Activated CD4-positive, alpha-beta memory T cell treated with anti-CD3 and anti-CD28 coated beads for 36 hours (primary cell): ENCODE measurements at regions of chr7 and their contacts with region 1.

Region 1: DNA sequence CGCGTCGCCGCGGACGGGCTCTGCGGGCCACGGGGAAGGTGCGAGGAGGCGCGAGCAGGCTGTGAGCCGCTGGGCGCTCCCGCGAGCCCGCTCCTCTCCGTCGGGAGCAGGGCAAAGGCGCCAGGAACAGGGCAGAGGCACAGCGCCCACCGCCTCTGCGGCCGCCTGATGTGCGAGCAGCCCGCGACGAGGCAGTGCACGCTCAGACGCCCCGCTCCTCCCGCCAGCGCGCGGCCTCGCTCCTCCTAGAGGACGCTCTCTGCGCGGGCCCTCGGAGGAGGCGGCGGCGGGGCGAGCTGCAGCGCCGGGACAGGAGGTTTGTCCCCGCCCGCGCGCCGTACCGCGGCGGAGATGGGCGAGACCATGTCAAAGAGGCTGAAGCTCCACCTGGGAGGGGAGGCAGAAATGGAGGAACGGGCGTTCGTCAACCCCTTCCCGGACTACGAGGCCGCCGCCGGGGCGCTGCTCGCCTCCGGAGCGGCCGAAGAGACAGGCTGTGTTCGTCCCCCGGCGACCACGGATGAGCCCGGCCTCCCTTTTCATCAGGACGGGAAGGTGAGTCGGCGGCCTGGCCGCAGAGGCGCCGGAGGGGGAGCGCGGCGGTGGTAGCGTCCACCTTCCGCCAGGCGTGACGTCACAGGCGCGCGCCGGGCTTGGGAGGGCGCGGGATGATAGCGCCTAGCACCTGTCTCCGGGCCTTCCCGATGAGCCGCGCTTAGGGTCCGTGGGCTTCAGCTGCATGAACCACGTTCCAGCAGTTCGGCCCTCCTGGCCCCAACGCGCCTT is 731 bp downstream of the LANCL2 start:
- DNase-seq: peak; percentile 95
- H3K4me3 Mint-ChIP-seq: peak overlapping the region; percentile 80
- H3K27ac Mint-ChIP-seq: peak overlapping the region; percentile 98
- H3K4me1 Mint-ChIP-seq: peaks cover 26% of the 10 kb centered on the region
- H3K27me3 Mint-ChIP-seq: no peaks in the 10 kb centered on the region

Region 2: GRCh38 chr7:54591404-54592386 is 774.2 kb before region 1 on chr7:
- CTCF ChIA-PET with region 1: no interaction called
- POLR2A ChIA-PET with region 1: no interaction called
- intact Hi-C with region 1: no loop called
- DNase-seq: no peak
- H3K4me3 Mint-ChIP-seq: no peak overlapping the region
- H3K27ac Mint-ChIP-seq: no peak overlapping the region
- H3K4me1 Mint-ChIP-seq: no peaks in the 10 kb centered on the region
- H3K27me3 Mint-ChIP-seq: no peaks in the 10 kb centered on the region

Region 3: DNA sequence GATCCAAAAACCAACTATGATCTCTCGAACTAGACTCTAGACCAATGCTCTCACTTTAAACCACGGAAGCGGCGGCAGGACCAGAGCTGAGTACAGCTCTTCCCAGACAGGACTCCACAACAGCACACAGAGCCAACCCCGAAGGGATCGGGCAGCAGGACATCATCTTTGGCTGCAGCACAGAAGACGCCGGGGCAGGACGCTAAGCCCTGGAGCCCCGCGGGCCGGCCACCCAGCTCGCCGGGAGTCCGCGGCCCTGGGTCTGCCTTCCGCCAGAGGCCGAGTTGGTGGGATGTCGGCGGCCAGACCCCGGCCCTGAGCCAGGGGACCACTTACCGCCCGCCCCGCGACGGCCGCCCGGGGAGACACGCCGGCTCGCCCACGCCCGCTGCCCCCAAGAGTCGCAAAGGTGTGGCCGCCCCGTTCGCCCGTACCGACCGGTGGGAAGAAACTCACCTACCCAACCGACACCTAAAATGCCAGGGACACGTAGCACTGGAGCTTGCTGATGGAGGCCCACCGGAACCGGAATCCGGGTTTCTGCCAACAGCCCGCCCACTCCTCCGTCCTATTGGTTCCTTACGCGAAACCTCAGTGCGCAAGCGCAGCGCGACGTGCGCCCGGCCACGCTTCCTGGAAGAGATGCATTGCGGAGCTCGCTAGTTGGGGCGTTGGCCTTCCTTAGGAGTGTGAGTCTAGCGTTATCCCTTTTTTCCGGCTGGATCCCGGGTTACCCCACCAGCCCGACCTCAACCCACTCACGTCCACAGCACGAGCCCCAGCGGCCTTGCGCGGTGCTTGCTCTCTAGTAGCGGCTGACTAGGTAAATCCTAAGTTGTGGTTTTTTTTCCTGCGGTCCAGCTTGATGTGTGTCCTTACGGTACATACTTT is 606.9 kb before region 1 on chr7 and contains the start of gene SEC61G:
- CTCF ChIA-PET with region 1: no interaction called
- POLR2A ChIA-PET with region 1: interaction called, 9 read pairs
- intact Hi-C with region 1: loop called (anchors 1 kb)
- DNase-seq: peak; percentile 97
- H3K4me3 Mint-ChIP-seq: peak within 1 kb of the TSS; percentile 100
- H3K27ac Mint-ChIP-seq: peak within 1 kb of the TSS; percentile 94
- H3K4me1 Mint-ChIP-seq: peaks cover 24% of the 10 kb centered on the region
- H3K27me3 Mint-ChIP-seq: peaks cover 4% of the 10 kb centered on the region
- total RNA-seq, gene SEC61G: 171 to 177 TPM

Region 4: GRCh38 chr7:55280031-55280454 is 85.8 kb before region 1 on chr7:
- CTCF ChIA-PET with region 1: interaction called, 16 read pairs
- POLR2A ChIA-PET with region 1: no interaction called
- intact Hi-C with region 1: loop called (anchors 2 kb)
- DNase-seq: peak; percentile 66
- H3K4me3 Mint-ChIP-seq: no peak overlapping the region
- H3K27ac Mint-ChIP-seq: no peak overlapping the region
- H3K4me1 Mint-ChIP-seq: no peaks in the 10 kb centered on the region
- H3K27me3 Mint-ChIP-seq: peaks cover 3% of the 10 kb centered on the region

Region 5: DNA sequence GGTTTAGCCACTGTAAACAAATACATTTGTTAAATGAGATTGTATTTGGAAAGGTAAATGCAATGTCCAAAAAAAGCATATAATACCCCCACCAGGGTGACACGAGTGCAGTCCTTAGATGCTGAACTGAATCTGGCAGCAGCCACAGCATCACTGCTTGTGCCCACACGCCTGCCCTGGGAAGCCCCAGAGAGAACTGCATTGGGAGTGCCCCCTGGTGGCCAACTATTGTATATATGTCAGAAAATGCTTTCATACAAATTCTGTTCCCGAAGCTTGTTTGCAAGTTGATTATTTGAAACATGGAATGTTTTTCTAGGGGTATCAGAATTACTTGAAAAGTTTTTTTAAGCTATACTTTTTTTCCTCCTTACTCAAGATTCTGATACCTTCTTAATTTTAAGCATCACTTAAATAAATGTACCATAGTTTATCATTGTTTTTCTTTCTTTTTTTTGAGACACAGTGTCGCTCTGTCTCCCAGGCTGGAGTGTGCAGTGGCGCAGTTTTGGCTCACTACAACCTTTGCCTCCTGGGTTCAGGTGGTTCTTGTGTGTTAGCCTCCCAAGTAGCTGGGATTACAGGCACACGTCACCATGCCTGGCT is 49.4 kb after region 1 on chr7:
- CTCF ChIA-PET with region 1: interaction called, 14 read pairs
- POLR2A ChIA-PET with region 1: interaction called, 4 read pairs
- intact Hi-C with region 1: loop called (anchors 1 kb)
- DNase-seq: peak; percentile 85
- H3K4me3 Mint-ChIP-seq: no peak overlapping the region
- H3K27ac Mint-ChIP-seq: no peak overlapping the region
- H3K4me1 Mint-ChIP-seq: peaks cover 2% of the 10 kb centered on the region
- H3K27me3 Mint-ChIP-seq: no peaks in the 10 kb centered on the region

Region 6: GRCh38 chr7:55593515-55594318 is 227.8 kb after region 1 on chr7:
- CTCF ChIA-PET with region 1: no interaction called
- POLR2A ChIA-PET with region 1: no interaction called
- intact Hi-C with region 1: loop called (anchors 5 kb)
- DNase-seq: peak; percentile 84
- H3K4me3 Mint-ChIP-seq: no peak overlapping the region
- H3K27ac Mint-ChIP-seq: no peak overlapping the region
- H3K4me1 Mint-ChIP-seq: peaks cover 11% of the 10 kb centered on the region
- H3K27me3 Mint-ChIP-seq: peaks cover 2% of the 10 kb centered on the region

Region 7: GRCh38 chr7:56051339-56052191 is 685.7 kb after region 1 on chr7 and contains the starts of genes CCT6A and PSPH:
- CTCF ChIA-PET with region 1: no interaction called
- POLR2A ChIA-PET with region 1: no interaction called
- intact Hi-C with region 1: loop called (anchors 2 kb)
- DNase-seq: peak; percentile 94
- H3K4me3 Mint-ChIP-seq: peak within 1 kb of the TSS; percentile 95
- H3K27ac Mint-ChIP-seq: peak within 1 kb of the TSS; percentile 94
- H3K4me1 Mint-ChIP-seq: peaks cover 36% of the 10 kb centered on the region
- H3K27me3 Mint-ChIP-seq: no peaks in the 10 kb centered on the region
- total RNA-seq, gene CCT6A: 222 to 230 TPM
- total RNA-seq, gene PSPH: 16.3 to 20.9 TPM